Naive thymus-derived CD4-positive, alpha-beta T cell (primary cell): ENCODE measurements at regions of chr2 and their contacts with region 1.

Region 1: GRCh38 chr2:37414470-37414949 is 70.1 kb downstream of the QPCT start:
- DNase-seq: peak in 6 of 9 donors; percentile 28 to 63 (median 57)
- ATAC-seq: peak; percentile 85
- H3K4me3 ChIP-seq: no peak overlapping the region
- H3K4me3 Mint-ChIP-seq: no peak overlapping the region
- H3K27ac ChIP-seq: no peak overlapping the region
- H3K27ac Mint-ChIP-seq: no peak overlapping the region
- H3K4me1 ChIP-seq: no peaks in the 10 kb centered on the region
- H3K4me1 Mint-ChIP-seq: peaks cover 0 to 7% (median 5%) of the 10 kb centered on the region in 7 donors
- H3K27me3 ChIP-seq: no peaks in the 10 kb centered on the region
- H3K27me3 Mint-ChIP-seq: peaks cover 0 to 17% (median 0%) of the 10 kb centered on the region in 5 donors

Region 2: GRCh38 chr2:37537316-37537715 is 122.8 kb after region 1 on chr2:
- CTCF ChIA-PET with region 1: interaction called, 7 read pairs
- POLR2A ChIA-PET with region 1: no interaction called
- intact Hi-C with region 1: loop called in 1 of 2 experiments (anchors 1 kb)
- DNase-seq: no peak
- ATAC-seq: no peak
- H3K4me3 ChIP-seq: no peak overlapping the region
- H3K4me3 Mint-ChIP-seq: no peak overlapping the region
- H3K27ac ChIP-seq: no peak overlapping the region
- H3K27ac Mint-ChIP-seq: no peak overlapping the region
- H3K4me1 ChIP-seq: no peaks in the 10 kb centered on the region
- H3K4me1 Mint-ChIP-seq: peaks cover 0 to 5% (median 3%) of the 10 kb centered on the region in 7 donors
- H3K27me3 ChIP-seq: no peaks in the 10 kb centered on the region
- H3K27me3 Mint-ChIP-seq: peaks cover 0 to 28% (median 0%) of the 10 kb centered on the region in 5 donors

Region 3: DNA sequence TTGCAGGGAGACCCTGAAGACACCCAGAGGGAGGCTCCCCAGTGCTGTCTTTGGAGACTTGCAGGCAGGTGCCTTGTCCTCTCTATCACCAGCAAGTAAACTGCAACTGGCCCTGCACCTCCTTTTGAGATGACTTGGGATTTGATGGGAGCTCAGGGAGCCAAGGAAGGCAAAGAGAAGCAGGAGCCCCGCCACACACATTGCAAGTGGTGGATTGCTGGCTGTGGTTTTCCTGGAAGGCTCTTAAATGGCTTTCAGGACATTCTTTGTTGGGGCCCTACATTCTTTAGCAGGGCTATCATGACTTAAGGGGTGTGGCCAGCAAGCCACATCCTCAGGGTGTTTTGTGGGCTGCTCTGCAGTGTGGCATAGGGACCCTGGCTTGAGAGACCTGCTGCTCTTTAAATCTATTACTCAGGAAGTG is 296.8 kb after region 1 on chr2:
- CTCF ChIA-PET with region 1: no interaction called
- POLR2A ChIA-PET with region 1: no interaction called
- intact Hi-C with region 1: loop called in 1 of 2 experiments (anchors 10 kb)
- DNase-seq: peak in 4 of 9 donors; percentile 3 to 15 (median 10)
- ATAC-seq: peak; percentile 76
- H3K4me3 ChIP-seq: no peak overlapping the region
- H3K4me3 Mint-ChIP-seq: peak overlapping the region in 6 of 10 donors; percentile 27 to 58 (median 48)
- H3K27ac ChIP-seq: no peak overlapping the region
- H3K27ac Mint-ChIP-seq: peak overlapping the region in 7 of 9 donors; percentile 6 to 69 (median 31)
- H3K4me1 ChIP-seq: peaks cover 14 to 28% of the 10 kb centered on the region in 2 donors
- H3K4me1 Mint-ChIP-seq: peaks cover 15 to 47% (median 22%) of the 10 kb centered on the region in 7 donors
- H3K27me3 ChIP-seq: no peaks in the 10 kb centered on the region
- H3K27me3 Mint-ChIP-seq: peaks cover 0 to 6% (median 0%) of the 10 kb centered on the region in 5 donors

Region 4: GRCh38 chr2:37832590-37833197 is 418.2 kb after region 1 on chr2:
- CTCF ChIA-PET with region 1: interaction called, 209 read pairs
- POLR2A ChIA-PET with region 1: interaction called, 6 read pairs
- intact Hi-C with region 1: loop called (anchors 1 kb)
- DNase-seq: peak; percentile 56 to 82 (median 72)
- ATAC-seq: peak; percentile 87
- H3K4me3 ChIP-seq: no peak overlapping the region
- H3K4me3 Mint-ChIP-seq: no peak overlapping the region
- H3K27ac ChIP-seq: no peak overlapping the region
- H3K27ac Mint-ChIP-seq: no peak overlapping the region
- H3K4me1 ChIP-seq: no peaks in the 10 kb centered on the region
- H3K4me1 Mint-ChIP-seq: peaks cover 0 to 15% (median 5%) of the 10 kb centered on the region in 7 donors
- H3K27me3 ChIP-seq: no peaks in the 10 kb centered on the region
- H3K27me3 Mint-ChIP-seq: no peaks in the 10 kb centered on the region